Naive thymus-derived CD4-positive, alpha-beta T cell (primary cell): ENCODE measurements at regions of chr5 and their contacts with region 1.

Region 1: DNA sequence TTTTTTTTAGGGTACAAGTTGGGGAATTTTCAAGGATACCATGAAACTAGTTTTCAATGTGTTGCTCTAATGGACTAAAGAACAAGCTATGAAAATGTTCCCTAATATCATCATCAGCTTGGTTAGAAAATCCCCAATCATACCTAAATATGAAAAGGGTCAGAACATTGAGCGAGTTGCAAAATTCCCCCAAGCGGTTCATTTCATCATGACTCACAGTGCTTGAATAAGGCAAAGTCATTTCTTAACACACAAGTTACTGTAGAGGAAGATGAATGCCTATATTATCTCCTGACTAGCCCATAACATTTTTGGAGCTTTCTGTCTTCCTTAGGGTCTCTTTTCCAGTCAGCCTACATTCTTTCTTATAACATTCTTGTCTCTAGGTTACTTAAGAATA is 62.7 kb downstream of the ST8SIA4 start:
- DNase-seq: peak in 1 of 9 donors; percentile 29
- ATAC-seq: peak; percentile 83
- H3K4me3 ChIP-seq: no peak overlapping the region
- H3K4me3 Mint-ChIP-seq: peak overlapping the region in 3 of 10 donors; percentile 8 to 69 (median 47)
- H3K27ac ChIP-seq: no peak overlapping the region
- H3K27ac Mint-ChIP-seq: peak overlapping the region in 4 of 9 donors; percentile 0 to 90 (median 54)
- H3K4me1 ChIP-seq: peaks cover 6 to 14% of the 10 kb centered on the region in 2 donors
- H3K4me1 Mint-ChIP-seq: peaks cover 21 to 67% (median 63%) of the 10 kb centered on the region in 7 donors
- H3K27me3 ChIP-seq: no peaks in the 10 kb centered on the region
- H3K27me3 Mint-ChIP-seq: no peaks in the 10 kb centered on the region

Region 2: DNA sequence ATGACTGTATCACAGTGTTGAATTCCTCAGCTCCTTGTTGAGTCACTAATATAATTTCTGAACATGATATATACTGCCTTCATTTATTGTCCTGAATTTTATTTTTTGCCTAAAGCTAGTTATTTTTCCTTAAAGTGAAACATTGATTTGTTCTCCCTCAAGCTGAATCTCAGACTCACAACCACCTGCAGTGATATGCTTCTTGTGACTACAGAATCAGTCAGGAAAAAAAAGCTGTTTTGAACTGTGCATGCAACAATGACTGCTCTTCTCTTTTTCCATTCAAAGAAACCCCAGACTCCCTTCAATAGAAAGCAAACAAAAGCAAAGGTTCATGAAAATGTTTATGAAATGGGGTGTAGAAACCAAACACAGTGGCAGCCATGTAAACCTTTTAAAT is 1441.4 kb before region 1 on chr5:
- CTCF ChIA-PET with region 1: no interaction called
- POLR2A ChIA-PET with region 1: no interaction called
- intact Hi-C with region 1: no loop called
- DNase-seq: no peak
- ATAC-seq: no peak
- H3K4me3 ChIP-seq: no peak overlapping the region
- H3K4me3 Mint-ChIP-seq: no peak overlapping the region
- H3K27ac ChIP-seq: no peak overlapping the region
- H3K27ac Mint-ChIP-seq: no peak overlapping the region
- H3K4me1 ChIP-seq: no peaks in the 10 kb centered on the region
- H3K4me1 Mint-ChIP-seq: no peaks in the 10 kb centered on the region
- H3K27me3 ChIP-seq: no peaks in the 10 kb centered on the region
- H3K27me3 Mint-ChIP-seq: no peaks in the 10 kb centered on the region

Region 3: DNA sequence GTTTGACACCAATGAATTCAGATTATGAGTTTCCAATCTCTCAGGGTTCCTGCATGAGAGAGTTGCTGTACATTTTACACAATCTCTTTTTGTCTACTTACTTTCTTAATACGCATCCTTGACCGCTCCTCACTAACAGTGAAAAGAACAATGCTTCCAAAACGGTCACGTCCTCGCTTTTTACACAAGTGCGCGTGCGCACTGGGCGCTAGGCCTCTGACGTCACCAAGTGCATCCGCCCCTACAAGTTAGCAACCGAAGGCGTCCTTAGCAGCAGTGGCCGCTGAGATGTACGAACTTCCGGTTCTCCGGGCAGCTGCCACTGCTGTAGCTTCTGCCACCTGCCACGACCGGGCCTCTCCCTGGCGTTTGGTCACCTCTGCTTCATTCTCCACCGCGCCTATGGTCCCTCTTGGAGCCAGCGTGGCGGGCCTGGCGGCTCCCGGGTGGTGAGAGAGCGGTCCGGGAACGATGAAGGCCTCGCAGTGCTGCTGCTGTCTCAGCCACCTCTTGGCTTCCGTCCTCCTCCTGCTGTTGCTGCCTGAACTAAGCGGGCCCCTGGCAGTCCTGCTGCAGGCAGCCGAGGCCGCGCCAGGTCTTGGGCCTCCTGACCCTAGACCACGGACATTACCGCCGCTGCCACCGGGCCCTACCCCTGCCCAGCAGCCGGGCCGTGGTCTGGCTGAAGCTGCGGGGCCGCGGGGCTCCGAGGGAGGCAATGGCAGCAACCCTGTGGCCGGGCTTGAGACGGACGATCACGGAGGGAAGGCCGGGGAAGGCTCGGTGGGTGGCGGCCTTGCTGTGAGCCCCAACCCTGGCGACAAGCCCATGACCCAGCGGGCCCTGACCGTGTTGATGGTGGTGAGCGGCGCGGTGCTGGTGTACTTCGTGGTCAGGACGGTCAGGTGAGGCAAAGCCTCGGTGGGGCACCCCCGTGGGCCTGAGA is 305.1 kb before region 1 on chr5 and contains the start of gene FAM174A:
- CTCF ChIA-PET with region 1: no interaction called
- POLR2A ChIA-PET with region 1: no interaction called
- intact Hi-C with region 1: loop called in 1 of 2 experiments (anchors 5 kb)
- DNase-seq: peak; percentile 88 to 96 (median 95)
- ATAC-seq: peak; percentile 91
- H3K4me3 ChIP-seq: peak within 1 kb of the TSS; percentile 88
- H3K4me3 Mint-ChIP-seq: peak within 1 kb of the TSS; percentile 84 to 100 (median 96)
- H3K27ac ChIP-seq: peak within 1 kb of the TSS; percentile 82
- H3K27ac Mint-ChIP-seq: peak within 1 kb of the TSS; percentile 81 to 100 (median 97)
- H3K4me1 ChIP-seq: peaks cover 10 to 11% of the 10 kb centered on the region in 2 donors
- H3K4me1 Mint-ChIP-seq: peaks cover 15 to 51% (median 33%) of the 10 kb centered on the region in 7 donors
- H3K27me3 ChIP-seq: no peaks in the 10 kb centered on the region
- H3K27me3 Mint-ChIP-seq: peaks cover 0 to 15% (median 0%) of the 10 kb centered on the region in 5 donors
- total RNA-seq, gene FAM174A: 4.6 to 10.7 (median 6.0) TPM

Region 4: DNA sequence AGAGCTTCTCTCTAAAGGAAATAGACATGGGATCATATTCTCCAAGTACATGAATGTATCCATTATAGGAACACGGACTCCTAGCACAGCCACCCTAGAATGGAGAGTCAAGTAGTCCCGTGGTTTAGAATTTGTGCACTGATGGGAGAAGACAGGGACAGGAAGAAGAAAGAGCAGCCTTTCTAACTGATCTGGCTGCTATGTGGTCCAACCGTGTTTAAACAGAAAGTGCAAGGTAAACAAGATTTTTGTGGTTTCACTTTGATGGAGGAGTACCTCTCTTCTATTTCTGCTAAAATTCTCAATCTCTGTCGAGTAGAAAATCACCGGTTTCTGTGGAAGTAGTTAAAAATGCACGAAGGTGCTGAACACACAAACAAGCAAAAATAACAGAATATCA is 108.6 kb before region 1 on chr5:
- CTCF ChIA-PET with region 1: no interaction called
- POLR2A ChIA-PET with region 1: no interaction called
- intact Hi-C with region 1: loop called in 1 of 2 experiments (anchors 5 kb)
- DNase-seq: peak in 7 of 9 donors; percentile 14 to 55 (median 45)
- ATAC-seq: peak; percentile 87
- H3K4me3 ChIP-seq: peak overlapping the region; percentile 7
- H3K4me3 Mint-ChIP-seq: peak overlapping the region in 9 of 10 donors; percentile 1 to 85 (median 80)
- H3K27ac ChIP-seq: no peak overlapping the region
- H3K27ac Mint-ChIP-seq: peak overlapping the region; percentile 28 to 83 (median 65)
- H3K4me1 ChIP-seq: peaks cover 0 to 11% of the 10 kb centered on the region in 2 donors
- H3K4me1 Mint-ChIP-seq: peaks cover 4 to 14% (median 9%) of the 10 kb centered on the region in 7 donors
- H3K27me3 ChIP-seq: no peaks in the 10 kb centered on the region
- H3K27me3 Mint-ChIP-seq: no peaks in the 10 kb centered on the region

Region 5: DNA sequence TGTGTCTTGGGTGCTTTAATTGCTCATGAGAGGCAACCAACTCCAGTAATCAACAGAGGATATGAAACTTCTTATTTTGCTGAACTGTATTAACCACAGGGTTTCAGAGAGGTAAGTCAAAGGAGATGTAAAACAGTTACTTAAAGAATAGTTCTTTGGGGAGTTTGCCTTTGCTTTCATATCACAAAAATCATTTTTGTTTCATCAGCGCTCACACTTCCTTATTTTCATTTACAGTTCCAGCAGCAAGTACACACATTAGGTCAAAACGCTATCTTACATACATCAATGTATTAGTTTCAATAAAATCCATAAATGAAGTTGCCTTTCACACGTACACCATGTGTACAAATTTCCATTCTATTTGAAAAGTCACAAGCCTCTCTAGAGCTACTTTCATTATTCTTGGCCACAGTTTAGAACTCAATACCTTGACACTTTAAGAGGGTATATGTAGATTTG is 12.6 kb after region 1 on chr5:
- CTCF ChIA-PET with region 1: interaction called, 3 read pairs
- POLR2A ChIA-PET with region 1: interaction called, 3 read pairs
- intact Hi-C with region 1: loop called (anchors 1 to 2 kb)
- DNase-seq: peak in 2 of 9 donors; percentile 5 to 6
- ATAC-seq: peak; percentile 76
- H3K4me3 ChIP-seq: no peak overlapping the region
- H3K4me3 Mint-ChIP-seq: peak overlapping the region in 8 of 10 donors; percentile 22 to 87 (median 53)
- H3K27ac ChIP-seq: no peak overlapping the region
- H3K27ac Mint-ChIP-seq: peak overlapping the region in 8 of 9 donors; percentile 30 to 97 (median 64)
- H3K4me1 ChIP-seq: peaks cover 9 to 11% of the 10 kb centered on the region in 2 donors
- H3K4me1 Mint-ChIP-seq: peaks cover 28 to 45% (median 41%) of the 10 kb centered on the region in 7 donors
- H3K27me3 ChIP-seq: no peaks in the 10 kb centered on the region
- H3K27me3 Mint-ChIP-seq: no peaks in the 10 kb centered on the region

Region 6: DNA sequence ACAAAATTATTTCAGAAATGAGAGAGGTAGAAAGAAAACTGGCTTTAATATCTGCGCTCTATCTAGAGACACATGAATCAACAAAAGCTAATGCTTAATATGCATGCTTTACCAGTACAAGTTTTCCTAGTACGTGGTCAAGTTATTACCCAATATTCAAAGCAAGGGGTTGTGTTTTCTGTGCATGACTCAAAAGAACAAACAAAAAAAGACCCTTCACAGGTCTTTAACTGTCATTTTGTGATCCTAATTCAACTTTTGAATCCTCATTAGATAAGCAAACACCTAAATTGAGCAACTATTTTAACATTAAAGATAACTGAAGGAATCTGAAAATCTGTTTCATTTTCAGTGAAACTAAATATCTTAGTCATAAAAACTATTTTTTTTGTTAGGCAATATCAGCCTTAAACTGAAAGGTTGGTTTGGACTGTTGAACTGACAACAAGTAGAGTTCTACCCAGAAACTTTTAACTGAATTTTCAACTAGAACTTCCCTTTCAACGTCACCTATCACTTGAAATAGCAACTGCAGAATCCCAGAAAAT is 50.2 kb after region 1 on chr5:
- CTCF ChIA-PET with region 1: no interaction called
- POLR2A ChIA-PET with region 1: no interaction called
- intact Hi-C with region 1: loop called in 1 of 2 experiments (anchors 2 kb)
- DNase-seq: no peak
- ATAC-seq: peak; percentile 47
- H3K4me3 ChIP-seq: peak overlapping the region; percentile 10
- H3K4me3 Mint-ChIP-seq: peak overlapping the region in 9 of 10 donors; percentile 6 to 81 (median 69)
- H3K27ac ChIP-seq: no peak overlapping the region
- H3K27ac Mint-ChIP-seq: peak overlapping the region; percentile 39 to 92 (median 72)
- H3K4me1 ChIP-seq: peaks cover 26 to 34% of the 10 kb centered on the region in 2 donors
- H3K4me1 Mint-ChIP-seq: peaks cover 27 to 83% (median 71%) of the 10 kb centered on the region in 7 donors
- H3K27me3 ChIP-seq: no peaks in the 10 kb centered on the region
- H3K27me3 Mint-ChIP-seq: no peaks in the 10 kb centered on the region